ENCODE measurements at regions of chr1 and their contacts with region 1.

Region 1: DNA sequence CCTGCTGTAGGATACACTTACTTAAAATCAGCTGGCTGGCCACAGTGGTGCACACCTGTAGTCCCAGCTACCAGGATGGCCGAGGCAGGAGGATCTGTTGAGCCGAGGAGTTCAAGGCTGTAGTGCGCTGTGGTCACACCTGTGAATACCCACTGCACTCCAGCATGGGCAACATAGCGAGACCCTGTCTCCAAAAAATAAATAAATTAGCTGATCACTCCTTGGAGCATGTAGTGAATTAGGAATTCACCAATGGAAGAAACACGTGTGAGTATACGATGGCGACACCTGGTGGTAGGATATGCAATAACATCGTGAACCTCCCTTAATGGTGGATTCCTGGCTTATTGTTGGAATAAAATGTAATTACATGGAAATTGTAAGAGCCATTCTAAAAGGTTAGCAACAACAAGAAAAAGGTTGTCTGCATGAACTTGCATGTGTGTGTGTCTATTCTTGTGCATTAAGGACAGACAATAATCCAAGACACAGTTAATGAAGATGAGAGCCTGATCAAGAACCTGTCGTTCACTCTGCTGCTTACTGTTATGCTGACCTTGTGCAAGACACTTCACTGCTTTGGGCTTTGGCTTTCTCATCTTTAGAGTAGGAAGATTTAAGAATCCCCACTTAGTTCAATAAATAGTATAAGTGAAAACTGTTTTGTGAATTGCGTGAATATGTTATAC is 38.6 kb upstream of the COX20 start:
- DNase-seq: peak; percentile 68 to 83 (median 69)
- ATAC-seq: peak; percentile 66
- H3K4me3 ChIP-seq: no peak overlapping the region
- H3K27ac ChIP-seq: no peak overlapping the region
- H3K4me1 ChIP-seq: no peaks in the 10 kb centered on the region
- H3K27me3 ChIP-seq: no peaks in the 10 kb centered on the region
- CTCF ChIP-seq: peak; percentile 72 to 91 (median 89)
- POLR2A ChIP-seq: no peak

Region 2: DNA sequence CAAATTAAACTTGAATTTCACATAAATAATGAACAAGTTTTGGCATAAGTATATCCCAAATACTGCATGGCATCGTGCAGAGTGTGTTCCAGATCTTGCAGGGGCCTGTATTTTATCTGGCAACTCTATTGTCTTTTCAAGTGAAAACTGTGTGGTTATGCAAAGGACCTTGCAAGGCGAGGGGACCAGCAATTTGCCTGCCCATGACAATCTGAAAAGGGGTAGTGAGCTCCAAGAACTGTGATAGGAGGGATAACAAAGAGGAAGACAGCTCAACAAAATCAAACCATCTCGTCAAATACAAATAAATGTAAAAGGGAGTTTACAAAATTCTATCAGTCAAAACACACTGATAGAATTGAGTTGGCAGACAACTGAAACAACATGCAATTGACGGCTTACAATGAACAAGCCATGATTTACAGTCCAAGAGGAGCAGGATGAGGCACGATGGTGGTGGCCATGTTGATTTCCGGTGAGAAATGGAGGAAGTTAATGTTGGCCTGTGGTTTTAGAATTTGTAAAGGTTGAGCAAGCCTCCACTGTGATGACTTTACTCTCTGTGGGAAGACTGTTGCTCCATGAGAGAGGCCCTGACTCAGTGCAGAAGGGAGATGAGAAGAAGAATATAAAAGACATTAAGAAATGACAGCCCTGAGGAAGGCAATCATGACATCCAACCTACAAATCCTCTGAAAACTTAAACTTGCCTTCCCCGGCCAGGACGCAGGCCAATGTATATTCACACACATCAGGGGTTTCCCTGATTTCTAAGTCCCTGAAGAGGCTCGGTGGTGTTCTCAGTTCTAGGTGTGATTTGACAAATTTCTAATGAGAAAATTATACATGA is 477.4 kb before region 1 on chr1:
- intact Hi-C with region 1: no loop called
- DNase-seq: peak in 1 of 4 donors; percentile 55
- ATAC-seq: no peak
- H3K4me3 ChIP-seq: no peak overlapping the region
- H3K27ac ChIP-seq: peak overlapping the region in 1 of 4 donors; percentile 49
- H3K4me1 ChIP-seq: peaks cover 29% of the 10 kb centered on the region
- H3K27me3 ChIP-seq: no peaks in the 10 kb centered on the region
- CTCF ChIP-seq: no peak
- POLR2A ChIP-seq: no peak

Region 3: GRCh38 chr1:244419024-244419423 is 377.8 kb before region 1 on chr1:
- intact Hi-C with region 1: no loop called
- DNase-seq: no peak
- ATAC-seq: no peak
- H3K4me3 ChIP-seq: no peak overlapping the region
- H3K27ac ChIP-seq: no peak overlapping the region
- H3K4me1 ChIP-seq: no peaks in the 10 kb centered on the region
- H3K27me3 ChIP-seq: no peaks in the 10 kb centered on the region
- CTCF ChIP-seq: no peak
- POLR2A ChIP-seq: no peak

Region 4: DNA sequence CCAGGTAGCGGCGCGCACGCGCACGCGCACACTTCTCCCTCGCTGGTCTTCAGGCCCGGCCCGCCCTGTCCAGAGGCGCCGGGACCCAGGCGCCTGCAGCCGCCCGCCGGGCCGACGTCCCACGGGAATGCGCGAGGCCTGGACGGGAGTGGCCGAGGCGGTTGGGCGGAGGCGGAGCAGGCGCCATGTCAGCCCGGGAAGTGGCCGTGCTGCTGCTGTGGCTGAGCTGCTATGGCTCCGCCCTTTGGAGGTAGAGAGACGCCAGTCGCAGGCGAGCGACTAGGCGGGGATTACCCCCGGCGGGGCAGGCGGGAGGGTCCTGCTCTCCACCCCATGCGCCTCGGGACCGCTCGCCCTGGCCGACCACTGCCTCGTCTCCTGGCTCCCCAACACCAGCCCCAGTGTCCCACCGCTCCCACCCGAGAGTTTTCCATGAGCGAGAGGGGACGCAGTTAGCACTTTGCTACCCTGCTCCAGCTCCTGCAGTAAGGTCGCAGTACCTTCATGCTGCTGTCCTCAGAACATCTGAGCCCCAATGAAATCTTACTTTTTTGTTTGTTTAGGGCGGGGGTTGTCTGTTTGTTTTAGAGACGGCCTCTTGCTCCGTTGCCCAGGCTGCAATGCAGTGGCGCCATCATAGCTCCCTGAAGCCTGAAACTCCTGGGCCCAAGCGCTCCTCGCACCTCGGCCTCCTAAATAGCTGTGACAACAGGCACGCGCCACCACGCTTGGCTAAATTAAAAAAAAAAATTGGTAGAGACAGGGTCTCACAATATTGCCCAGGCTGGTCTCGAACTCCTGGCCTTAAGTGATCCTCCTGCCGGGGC is 335.4 kb before region 1 on chr1 and contains the start of gene CATSPERE:
- intact Hi-C with region 1: loop called (anchors 10 kb)
- DNase-seq: peak; percentile 91 to 95 (median 94)
- ATAC-seq: peak; percentile 97
- H3K4me3 ChIP-seq: peak within 1 kb of the TSS; percentile 8 to 57
- H3K27ac ChIP-seq: peak within 1 kb of the TSS; percentile 85 to 95 (median 90)
- H3K4me1 ChIP-seq: peaks cover 11% of the 10 kb centered on the region
- H3K27me3 ChIP-seq: no peaks in the 10 kb centered on the region
- CTCF ChIP-seq: peak in 2 of 7 experiments; percentile 0 to 26
- POLR2A ChIP-seq: peak; percentile 89 to 98 (median 95)
- total RNA-seq, gene CATSPERE: 0.26 to 2.3 TPM

Region 5: GRCh38 chr1:244605835-244606370 is 191.0 kb before region 1 on chr1:
- intact Hi-C with region 1: loop called (anchors 5 kb)
- DNase-seq: no peak
- ATAC-seq: no peak
- H3K4me3 ChIP-seq: no peak overlapping the region
- H3K27ac ChIP-seq: no peak overlapping the region
- H3K4me1 ChIP-seq: no peaks in the 10 kb centered on the region
- H3K27me3 ChIP-seq: no peaks in the 10 kb centered on the region
- CTCF ChIP-seq: no peak
- POLR2A ChIP-seq: no peak

Region 6: GRCh38 chr1:244854865-244855578 is 58.2 kb after region 1 on chr1:
- intact Hi-C with region 1: no loop called
- DNase-seq: no peak
- ATAC-seq: no peak
- H3K4me3 ChIP-seq: no peak overlapping the region
- H3K27ac ChIP-seq: peak overlapping the region in 1 of 4 donors; percentile 5
- H3K4me1 ChIP-seq: peaks cover 66% of the 10 kb centered on the region
- H3K27me3 ChIP-seq: no peaks in the 10 kb centered on the region
- CTCF ChIP-seq: no peak
- POLR2A ChIP-seq: no peak

Region 7: GRCh38 chr1:245008761-245009160 is 211.9 kb after region 1 on chr1:
- intact Hi-C with region 1: no loop called
- DNase-seq: no peak
- ATAC-seq: no peak
- H3K4me3 ChIP-seq: no peak overlapping the region
- H3K27ac ChIP-seq: no peak overlapping the region
- H3K4me1 ChIP-seq: no peaks in the 10 kb centered on the region
- H3K27me3 ChIP-seq: no peaks in the 10 kb centered on the region
- CTCF ChIP-seq: no peak
- POLR2A ChIP-seq: no peak